CD4-positive, alpha-beta memory T cell (primary cell): ENCODE measurements at regions of chr17 and their contacts with region 1.

Region 1: GRCh38 chr17:43917348-43918018 is 10.1 kb upstream of the MPP2 start:
- DNase-seq: peak; percentile 30 to 76 (median 53)
- H3K4me3 ChIP-seq: peak overlapping the region; percentile 19 to 63
- H3K4me3 Mint-ChIP-seq: peak overlapping the region; percentile 79 to 90 (median 86)
- H3K27ac ChIP-seq: peak overlapping the region; percentile 24
- H3K27ac Mint-ChIP-seq: peak overlapping the region; percentile 15 to 92 (median 63)
- H3K4me1 ChIP-seq: peaks cover 17% of the 10 kb centered on the region
- H3K4me1 Mint-ChIP-seq: peaks cover 11 to 17% (median 14%) of the 10 kb centered on the region in 4 donors
- H3K27me3 ChIP-seq: no peaks in the 10 kb centered on the region
- H3K27me3 Mint-ChIP-seq: no peaks in the 10 kb centered on the region

Region 2: GRCh38 chr17:43832976-43833829 is 84.3 kb before region 1 on chr17 and contains the start of gene MPP3:
- CTCF ChIA-PET with region 1: no interaction called
- POLR2A ChIA-PET with region 1: no interaction called
- intact Hi-C with region 1: no loop called
- DNase-seq: peak in 4 of 5 donors; percentile 47 to 57 (median 48)
- H3K4me3 ChIP-seq: peak within 1 kb of the TSS in 1 of 2 donors; percentile 54
- H3K4me3 Mint-ChIP-seq: peak within 1 kb of the TSS; percentile 79 to 89 (median 84)
- H3K27ac ChIP-seq: no peak within 1 kb of the TSS
- H3K27ac Mint-ChIP-seq: peak within 1 kb of the TSS in 5 of 7 donors; percentile 10 to 62 (median 53)
- H3K4me1 ChIP-seq: peaks cover 13% of the 10 kb centered on the region
- H3K4me1 Mint-ChIP-seq: peaks cover 5 to 27% (median 17%) of the 10 kb centered on the region in 4 donors
- H3K27me3 ChIP-seq: peaks cover 13% of the 10 kb centered on the region
- H3K27me3 Mint-ChIP-seq: peaks cover 13 to 26% of the 10 kb centered on the region in 2 donors
- total RNA-seq, gene MPP3: 0.32 TPM in 1 of 2 experiments, not detected in the other

Region 3: GRCh38 chr17:43846221-43846712 is 71.2 kb before region 1 on chr17:
- CTCF ChIA-PET with region 1: no interaction called
- POLR2A ChIA-PET with region 1: no interaction called
- intact Hi-C with region 1: no loop called
- DNase-seq: peak; percentile 56 to 70 (median 61)
- H3K4me3 ChIP-seq: no peak overlapping the region
- H3K4me3 Mint-ChIP-seq: no peak overlapping the region
- H3K27ac ChIP-seq: no peak overlapping the region
- H3K27ac Mint-ChIP-seq: no peak overlapping the region
- H3K4me1 ChIP-seq: no peaks in the 10 kb centered on the region
- H3K4me1 Mint-ChIP-seq: peaks cover 0 to 3% (median 0%) of the 10 kb centered on the region in 4 donors
- H3K27me3 ChIP-seq: peaks cover 5% of the 10 kb centered on the region
- H3K27me3 Mint-ChIP-seq: peaks cover 16 to 22% of the 10 kb centered on the region in 2 donors

Region 4: DNA sequence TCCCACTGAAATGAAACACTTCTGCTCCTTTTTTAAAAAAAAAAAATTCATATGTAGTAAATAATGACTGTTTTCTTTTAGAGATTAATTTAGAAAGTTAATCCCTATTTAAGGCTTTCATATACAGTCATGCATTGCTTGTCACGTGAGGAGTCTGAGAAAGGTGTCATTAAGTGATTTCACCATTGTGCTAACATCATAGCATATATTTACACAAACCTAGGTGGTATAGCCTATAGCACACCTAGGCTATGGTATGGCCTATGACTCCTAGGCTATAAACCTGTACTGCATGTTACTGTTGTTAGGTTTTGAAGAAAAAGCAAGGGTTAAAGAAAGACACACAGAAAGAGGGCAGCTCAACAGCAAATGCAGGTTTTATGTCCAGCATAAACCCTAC is 11.1 kb after region 1 on chr17:
- CTCF ChIA-PET with region 1: interaction called, 8 read pairs
- POLR2A ChIA-PET with region 1: no interaction called
- intact Hi-C with region 1: loop called (anchors 1 kb)
- DNase-seq: no peak
- H3K4me3 ChIP-seq: no peak overlapping the region
- H3K4me3 Mint-ChIP-seq: no peak overlapping the region
- H3K27ac ChIP-seq: no peak overlapping the region
- H3K27ac Mint-ChIP-seq: no peak overlapping the region
- H3K4me1 ChIP-seq: peaks cover 21% of the 10 kb centered on the region
- H3K4me1 Mint-ChIP-seq: peaks cover 12 to 29% (median 18%) of the 10 kb centered on the region in 4 donors
- H3K27me3 ChIP-seq: no peaks in the 10 kb centered on the region
- H3K27me3 Mint-ChIP-seq: peaks cover 0 to 3% of the 10 kb centered on the region in 2 donors

Region 5: DNA sequence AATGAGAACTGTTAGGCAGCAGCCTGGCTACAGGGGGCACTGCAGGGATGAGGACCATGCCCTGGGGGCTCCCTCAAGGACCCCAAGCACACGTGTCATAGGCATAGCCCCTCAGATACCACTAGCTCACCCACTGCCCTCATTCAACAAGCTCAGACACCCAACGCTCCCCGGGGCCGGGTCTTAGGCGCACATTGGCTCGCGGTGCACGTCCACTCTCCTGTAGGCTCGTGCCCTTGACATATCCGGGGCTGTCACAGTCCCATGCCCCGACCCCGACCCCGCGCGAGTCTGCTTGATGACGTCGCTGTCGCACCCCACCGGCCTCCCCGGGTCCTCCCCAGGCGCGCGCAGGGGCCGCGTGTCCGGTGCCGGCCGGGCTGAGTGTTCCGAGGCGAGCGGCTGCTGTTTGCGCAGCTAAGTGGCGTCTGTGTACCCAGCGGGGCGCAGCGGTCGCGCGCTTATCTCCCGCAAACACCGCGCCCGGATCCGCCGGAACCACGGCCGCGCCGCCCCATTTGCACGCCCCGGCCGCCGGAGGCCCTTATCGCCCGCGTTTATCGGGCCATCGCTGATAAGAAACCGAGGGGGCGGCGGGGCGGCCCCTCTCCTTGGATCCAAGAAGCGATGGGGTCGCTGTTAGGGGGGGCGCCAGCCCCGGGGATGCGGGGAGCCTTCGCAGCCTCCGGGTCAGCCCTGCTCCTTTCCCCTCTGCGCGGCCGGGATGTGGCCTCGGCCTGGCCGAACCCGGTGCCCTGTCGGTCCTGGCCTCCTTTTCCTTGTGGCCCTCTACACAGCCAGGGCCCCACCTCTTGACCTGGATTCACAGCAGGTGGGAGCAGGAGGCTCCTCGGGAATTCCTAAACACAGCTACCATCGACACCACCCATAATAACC is 66.3 kb after region 1 on chr17:
- CTCF ChIA-PET with region 1: no interaction called
- POLR2A ChIA-PET with region 1: no interaction called
- intact Hi-C with region 1: no loop called
- DNase-seq: no peak
- H3K4me3 ChIP-seq: no peak overlapping the region
- H3K4me3 Mint-ChIP-seq: peak overlapping the region in 4 of 8 donors; percentile 10 to 64 (median 48)
- H3K27ac ChIP-seq: no peak overlapping the region
- H3K27ac Mint-ChIP-seq: no peak overlapping the region
- H3K4me1 ChIP-seq: peaks cover 7% of the 10 kb centered on the region
- H3K4me1 Mint-ChIP-seq: peaks cover 0 to 12% (median 3%) of the 10 kb centered on the region in 4 donors
- H3K27me3 ChIP-seq: peaks cover 32% of the 10 kb centered on the region
- H3K27me3 Mint-ChIP-seq: peaks cover 24 to 37% of the 10 kb centered on the region in 2 donors

Region 6: GRCh38 chr17:44044067-44044466 is 126.6 kb after region 1 on chr17:
- CTCF ChIA-PET with region 1: interaction called, 4 read pairs
- POLR2A ChIA-PET with region 1: no interaction called
- intact Hi-C with region 1: loop called (anchors 1 kb)
- DNase-seq: no peak
- H3K4me3 ChIP-seq: no peak overlapping the region
- H3K4me3 Mint-ChIP-seq: no peak overlapping the region
- H3K27ac ChIP-seq: no peak overlapping the region
- H3K27ac Mint-ChIP-seq: peak overlapping the region in 3 of 7 donors; percentile 18 to 35 (median 34)
- H3K4me1 ChIP-seq: peaks cover 8% of the 10 kb centered on the region
- H3K4me1 Mint-ChIP-seq: peaks cover 11 to 16% (median 13%) of the 10 kb centered on the region in 4 donors
- H3K27me3 ChIP-seq: no peaks in the 10 kb centered on the region
- H3K27me3 Mint-ChIP-seq: no peaks in the 10 kb centered on the region